ENCODE measurements at regions of chr16 and their contacts with region 1.

Region 1: GRCh38 chr16:1420111-1420540 is 421 bp downstream of the UQCC4 start:
- DNase-seq: peak in 4 of 42 donors; percentile 8 to 17 (median 12)

Region 2: DNA sequence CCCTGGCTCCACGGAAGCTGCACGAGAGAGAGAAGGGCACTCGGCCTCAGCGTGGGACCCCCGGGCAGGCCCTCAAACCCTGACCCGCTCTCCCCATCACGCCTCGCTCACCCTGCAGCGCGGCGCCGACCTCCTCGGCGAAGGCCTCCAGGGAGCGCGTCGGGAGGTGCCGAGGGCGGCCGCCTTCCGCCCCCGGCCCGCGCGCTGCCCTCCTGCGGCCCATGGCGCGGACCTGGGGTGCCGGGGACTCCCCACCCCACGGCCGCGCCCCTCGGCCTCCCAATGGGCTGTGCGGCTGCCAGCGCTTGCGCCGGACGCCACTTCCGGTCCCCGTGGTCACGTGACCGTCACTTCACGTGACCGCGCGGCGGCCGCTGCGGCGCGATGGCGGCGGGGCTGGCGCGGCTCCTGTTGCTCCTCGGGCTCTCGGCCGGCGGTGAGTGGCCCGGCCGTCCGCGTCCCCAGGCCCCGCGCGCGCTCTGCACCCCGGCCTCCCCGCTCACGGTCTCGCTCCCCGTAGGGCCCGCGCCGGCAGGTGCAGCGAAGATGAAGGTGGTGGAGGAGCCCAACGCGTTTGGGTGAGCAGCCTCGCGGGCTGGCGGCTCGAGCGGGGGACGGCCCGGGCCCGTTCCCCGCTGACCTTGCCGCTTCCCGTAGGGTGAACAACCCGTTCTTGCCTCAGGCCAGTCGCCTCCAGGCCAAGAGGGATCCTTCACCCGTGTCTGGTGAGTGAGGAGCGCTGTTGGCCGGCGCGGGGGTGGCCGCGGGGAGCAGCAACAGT is 68.4 kb before region 1 on chr16 and contains the starts of genes GNPTG and TSR3:
- intact Hi-C with region 1: loop called (anchors 5 kb)
- DNase-seq: peak; percentile 24 to 89 (median 76)